GM12878 (cell line): ENCODE measurements at regions of chr22 and their contacts with region 1.

Region 1: DNA sequence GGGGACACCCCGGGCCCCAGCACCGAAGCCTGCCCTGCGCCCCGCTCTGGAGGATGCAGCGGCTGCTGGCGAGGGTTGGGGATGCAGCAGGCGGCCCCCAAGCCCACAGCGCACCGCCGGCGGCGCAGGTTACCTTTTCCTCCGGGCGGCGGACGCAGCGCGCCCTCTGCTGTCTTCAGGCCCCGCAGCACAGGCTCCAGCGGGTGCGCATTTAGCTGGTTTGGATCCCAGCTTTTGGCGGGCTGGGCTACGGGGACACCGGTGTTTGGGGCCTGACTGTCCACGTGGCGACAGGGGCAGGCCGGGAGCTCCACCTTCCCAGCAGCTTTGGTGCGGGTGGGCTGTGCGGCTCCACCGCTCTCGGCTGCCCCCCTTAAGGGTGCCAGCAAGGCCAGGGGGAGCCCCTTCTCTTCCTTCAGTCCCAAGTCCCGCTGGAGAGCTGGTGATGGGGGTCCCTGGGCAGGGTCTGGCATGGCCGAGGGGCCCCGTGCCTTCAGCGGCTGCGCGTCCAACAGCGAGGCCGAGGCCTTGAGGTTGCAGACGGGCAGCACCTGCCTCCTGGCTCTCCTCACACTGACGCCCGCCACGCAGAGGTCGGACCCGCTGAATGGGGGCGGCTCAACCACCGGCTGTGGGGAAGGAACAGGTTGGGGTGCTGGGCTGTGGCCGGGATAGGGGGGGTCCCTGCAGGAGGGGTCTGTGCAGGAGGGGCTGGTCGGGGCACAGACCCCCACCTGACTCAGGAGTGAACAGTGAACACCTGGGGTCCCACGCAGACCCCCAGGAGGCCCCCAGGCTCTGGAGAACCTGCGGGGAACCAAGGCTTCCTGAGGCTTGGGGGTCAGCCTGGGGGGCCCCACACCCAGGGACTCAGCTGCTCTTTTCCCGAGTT is 18.0 kb upstream of the IL17REL start:
- DNase-seq: no peak
- ATAC-seq: peak; percentile 98
- H3K4me3 ChIP-seq: no peak overlapping the region
- H3K27ac ChIP-seq: no peak overlapping the region
- H3K4me1 ChIP-seq: peaks cover 6% of the 10 kb centered on the region; the same call in 1 of the 2 replicates
- H3K27me3 ChIP-seq: peaks cover 0 to 4% of the 10 kb centered on the region in 2 experiments; a peak in 1 of 4 replicates
- CTCF ChIP-seq: peak; percentile 84 to 94 (median 94)
- EP300 ChIP-seq: no peak
- POLR2A ChIP-seq: no peak
- RAD21 ChIP-seq: peak; percentile 91

Region 2: DNA sequence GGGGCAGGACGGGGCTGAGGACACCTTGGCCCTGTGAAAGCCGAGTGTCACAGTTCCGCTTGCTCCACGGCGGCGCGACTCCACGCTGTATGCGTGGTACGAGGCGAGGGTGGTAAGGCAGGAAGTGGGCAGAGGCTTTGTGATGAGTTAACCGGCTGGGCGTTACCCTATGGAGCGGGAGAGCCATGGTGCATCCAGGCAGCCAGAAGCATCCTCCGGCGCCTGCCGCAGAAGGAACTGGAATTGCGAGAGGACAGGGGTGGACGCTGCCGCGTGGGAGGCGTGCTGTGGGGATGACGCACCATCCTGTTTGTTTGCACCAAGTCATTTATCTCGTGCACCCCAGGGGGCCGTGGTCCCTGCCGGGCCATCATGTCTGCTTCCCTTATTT is 846.7 kb before region 1 on chr22:
- CTCF ChIA-PET with region 1: no interaction called
- POLR2A ChIA-PET with region 1: no interaction called
- RAD21 ChIA-PET with region 1: no interaction called
- SMC1A ChIA-PET with region 1: no interaction called
- in situ Hi-C with region 1: no loop called
- intact Hi-C with region 1: no loop called
- DNase-seq: no peak
- ATAC-seq: no peak
- H3K4me3 ChIP-seq: no peak overlapping the region
- H3K27ac ChIP-seq: no peak overlapping the region
- H3K4me1 ChIP-seq: no peaks in the 10 kb centered on the region
- H3K27me3 ChIP-seq: no peaks in the 10 kb centered on the region
- CTCF ChIP-seq: no peak
- EP300 ChIP-seq: no peak
- POLR2A ChIP-seq: no peak
- RAD21 ChIP-seq: no peak

Region 3: DNA sequence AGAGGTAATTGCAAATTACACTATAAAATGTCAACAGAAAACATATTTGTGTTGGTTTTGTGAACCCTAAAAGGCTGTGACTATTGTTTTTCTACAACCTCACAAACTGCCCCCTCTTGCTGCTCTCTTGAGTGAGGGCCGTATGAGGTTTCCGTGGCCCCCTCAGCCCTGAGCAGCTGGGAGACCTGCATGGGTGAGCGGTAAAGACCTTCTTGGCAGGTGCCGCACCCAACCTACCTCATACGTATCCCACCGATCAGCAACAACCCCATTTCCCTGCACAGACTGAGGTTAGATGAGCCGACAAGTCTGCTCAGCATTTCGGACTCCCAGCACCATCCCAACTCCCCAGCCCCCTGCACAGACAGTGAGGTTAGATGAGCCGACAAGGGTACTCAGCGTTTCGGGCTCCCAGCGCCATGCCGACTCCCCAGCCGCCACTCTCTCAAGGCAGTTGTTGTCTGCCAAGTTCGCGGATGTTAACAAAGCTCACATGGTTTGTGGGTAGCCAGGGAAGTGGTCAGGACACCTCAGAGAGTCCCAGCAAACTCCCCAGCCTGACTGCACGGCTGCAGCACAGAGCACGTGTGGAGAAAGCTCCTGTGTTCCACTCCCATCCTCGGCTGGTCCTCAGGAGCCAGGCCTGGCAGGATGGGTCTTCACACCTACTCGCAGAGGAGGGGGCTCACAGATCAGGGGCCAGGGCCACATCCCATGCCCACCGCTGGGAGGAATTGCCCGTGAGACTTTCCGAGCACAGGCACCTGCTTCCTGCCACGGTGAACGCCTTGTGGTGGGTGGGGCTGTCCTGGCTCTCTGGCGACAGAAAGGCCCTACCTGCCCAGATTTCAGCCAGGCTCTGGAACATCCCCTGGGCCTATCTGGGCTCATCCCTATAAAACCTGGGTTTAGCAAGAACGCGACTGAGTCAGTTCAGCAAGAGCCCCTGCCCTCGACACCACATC is 705.7 kb before region 1 on chr22:
- CTCF ChIA-PET with region 1: no interaction called
- POLR2A ChIA-PET with region 1: no interaction called
- RAD21 ChIA-PET with region 1: no interaction called
- SMC1A ChIA-PET with region 1: no interaction called
- in situ Hi-C with region 1: loop called (anchors 25 kb)
- intact Hi-C with region 1: no loop called
- DNase-seq: no peak
- ATAC-seq: no peak
- H3K4me3 ChIP-seq: no peak overlapping the region
- H3K27ac ChIP-seq: no peak overlapping the region
- H3K4me1 ChIP-seq: no peaks in the 10 kb centered on the region
- H3K27me3 ChIP-seq: no peaks in the 10 kb centered on the region
- CTCF ChIP-seq: no peak
- EP300 ChIP-seq: no peak
- POLR2A ChIP-seq: no peak
- RAD21 ChIP-seq: no peak

Region 4: GRCh38 chr22:49925525-49926128 is 104.9 kb before region 1 on chr22:
- CTCF ChIA-PET with region 1: interaction called, 79 read pairs
- POLR2A ChIA-PET with region 1: interaction called, 4 read pairs
- RAD21 ChIA-PET with region 1: interaction called, 81 read pairs
- SMC1A ChIA-PET with region 1: interaction called, 43 read pairs
- in situ Hi-C with region 1: loop called (anchors 5 kb)
- intact Hi-C with region 1: no loop called
- DNase-seq: peak; percentile 71
- ATAC-seq: peak; percentile 72
- H3K4me3 ChIP-seq: peak overlapping the region; percentile 38; the same call in 1 of the 2 replicates
- H3K27ac ChIP-seq: peak overlapping the region; percentile 91
- H3K4me1 ChIP-seq: peaks cover 39% of the 10 kb centered on the region
- H3K27me3 ChIP-seq: no peaks in the 10 kb centered on the region
- CTCF ChIP-seq: no peak
- EP300 ChIP-seq: no peak
- POLR2A ChIP-seq: peak; percentile 85
- RAD21 ChIP-seq: no peak

Region 5: DNA sequence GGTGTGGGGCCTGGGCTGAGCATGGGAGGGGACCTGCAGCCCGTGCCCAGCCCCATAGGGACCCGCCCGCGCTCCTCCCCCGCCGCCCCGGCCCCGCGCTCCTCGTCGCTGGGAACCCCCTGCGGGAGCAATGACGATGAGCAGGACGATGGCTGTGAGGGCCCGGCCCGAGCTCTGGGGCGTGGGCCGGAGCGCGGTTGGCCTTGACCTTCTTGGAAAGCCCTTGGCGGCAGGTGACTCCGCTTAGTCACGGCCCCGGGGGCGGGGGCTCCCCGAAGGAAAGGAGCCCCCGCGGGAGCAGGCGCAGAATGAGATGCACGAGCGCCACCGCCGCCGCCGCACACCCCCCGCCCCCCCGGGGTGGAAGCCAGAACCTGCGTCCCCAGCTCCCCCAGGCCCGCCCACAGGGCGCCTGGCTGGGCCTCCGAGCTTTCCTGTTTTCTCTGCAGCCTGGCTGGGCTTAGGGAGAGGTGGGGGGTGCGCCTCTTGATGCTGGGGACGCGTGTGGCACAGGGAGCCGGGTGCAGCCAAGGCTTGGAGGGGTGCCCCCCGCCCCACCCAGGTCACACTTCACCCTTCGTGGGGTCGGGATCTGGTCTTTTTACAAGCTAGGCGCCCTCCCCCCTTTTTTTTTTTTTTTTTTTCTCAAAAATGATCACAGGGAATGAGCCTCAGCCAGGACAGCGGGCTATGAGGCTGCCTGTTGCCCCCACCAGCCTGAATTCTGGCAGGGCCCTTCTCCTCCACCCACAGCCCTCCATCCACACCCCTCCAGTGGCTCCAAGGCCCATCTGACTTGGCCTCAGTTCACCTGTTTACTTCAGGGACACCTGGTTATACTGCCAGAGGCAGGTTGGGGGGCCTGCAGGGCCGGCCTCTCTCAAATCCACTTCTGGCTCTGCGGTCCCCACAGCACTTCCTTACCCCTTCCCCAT is 94.3 kb before region 1 on chr22:
- CTCF ChIA-PET with region 1: interaction called, 79 read pairs
- POLR2A ChIA-PET with region 1: interaction called, 3 read pairs
- RAD21 ChIA-PET with region 1: interaction called, 81 read pairs
- SMC1A ChIA-PET with region 1: interaction called, 43 read pairs
- in situ Hi-C with region 1: loop called (anchors 5 kb)
- intact Hi-C with region 1: loop called (anchors 1 kb)
- DNase-seq: peak; percentile 69
- ATAC-seq: peak; percentile 87
- H3K4me3 ChIP-seq: peak overlapping the region; percentile 57
- H3K27ac ChIP-seq: peak overlapping the region; percentile 69
- H3K4me1 ChIP-seq: peaks cover 43% of the 10 kb centered on the region
- H3K27me3 ChIP-seq: no peaks in the 10 kb centered on the region
- CTCF ChIP-seq: no peak
- EP300 ChIP-seq: peak in 1 of 2 experiments; percentile 77; a peak in 2 of 4 replicates
- POLR2A ChIP-seq: peak; percentile 68
- RAD21 ChIP-seq: no peak

Region 6: DNA sequence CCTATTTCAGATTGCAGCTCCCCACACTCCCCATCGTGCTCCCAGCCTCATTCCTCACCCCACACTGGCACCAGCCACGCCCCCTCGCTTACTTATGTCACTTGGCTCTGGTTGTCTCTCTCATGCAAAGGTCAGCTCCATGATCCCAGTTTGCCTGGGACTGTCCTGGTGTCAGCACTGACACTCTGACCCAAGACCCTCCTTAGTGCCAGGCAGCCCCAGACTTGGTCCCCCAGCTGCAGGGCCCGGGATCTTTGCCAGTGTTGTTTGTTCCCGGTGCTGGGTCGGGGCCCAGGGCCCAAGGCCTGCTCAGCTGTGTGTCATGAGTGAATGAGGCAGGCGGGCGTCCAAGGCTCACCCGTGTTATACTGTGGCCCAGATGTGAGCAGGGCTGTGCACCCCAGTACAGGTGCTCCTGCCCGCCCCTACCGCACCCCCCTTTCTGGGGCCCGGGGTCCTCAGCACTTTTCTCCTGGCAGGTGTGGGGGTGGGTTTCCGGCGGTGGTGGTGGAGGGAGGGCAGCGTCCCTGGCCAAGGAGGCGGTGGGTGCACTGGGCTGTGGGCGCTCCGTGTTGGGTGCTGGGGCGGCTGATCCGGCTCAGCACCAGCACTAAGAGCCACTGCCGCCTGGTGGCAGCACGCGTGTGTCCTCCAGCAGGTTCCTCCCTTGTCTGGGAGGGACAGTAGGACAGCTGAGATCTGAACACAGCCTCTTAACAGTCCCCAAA is 37.5 kb before region 1 on chr22:
- CTCF ChIA-PET with region 1: interaction called, 47 read pairs
- POLR2A ChIA-PET with region 1: no interaction called
- RAD21 ChIA-PET with region 1: interaction called, 27 read pairs
- SMC1A ChIA-PET with region 1: interaction called, 16 read pairs
- in situ Hi-C with region 1: no loop called
- intact Hi-C with region 1: loop called (anchors 1 kb)
- DNase-seq: no peak
- ATAC-seq: peak; percentile 99
- H3K4me3 ChIP-seq: no peak overlapping the region
- H3K27ac ChIP-seq: no peak overlapping the region
- H3K4me1 ChIP-seq: no peaks in the 10 kb centered on the region
- H3K27me3 ChIP-seq: no peaks in the 10 kb centered on the region; a peak in 1 of 4 replicates
- CTCF ChIP-seq: peak; percentile 81 to 95 (median 93); a peak in 5 of 6 replicates
- EP300 ChIP-seq: no peak
- POLR2A ChIP-seq: no peak
- RAD21 ChIP-seq: peak; percentile 72

Region 7: GRCh38 chr22:50018608-50019285 is 11.8 kb before region 1 on chr22:
- CTCF ChIA-PET with region 1: interaction called, 11 read pairs
- POLR2A ChIA-PET with region 1: interaction called, 3 read pairs
- RAD21 ChIA-PET with region 1: interaction called, 6 read pairs
- SMC1A ChIA-PET with region 1: interaction called, 5 read pairs
- in situ Hi-C with region 1: no loop called
- intact Hi-C with region 1: no loop called
- DNase-seq: no peak
- ATAC-seq: no peak
- H3K4me3 ChIP-seq: no peak overlapping the region
- H3K27ac ChIP-seq: no peak overlapping the region
- H3K4me1 ChIP-seq: peaks cover 25% of the 10 kb centered on the region
- H3K27me3 ChIP-seq: no peaks in the 10 kb centered on the region; a peak in 2 of 4 replicates
- CTCF ChIP-seq: no peak
- EP300 ChIP-seq: no peak
- POLR2A ChIP-seq: no peak
- RAD21 ChIP-seq: no peak

Region 8: GRCh38 chr22:50221410-50222300 is 191.1 kb after region 1 on chr22:
- CTCF ChIA-PET with region 1: no interaction called
- POLR2A ChIA-PET with region 1: no interaction called
- RAD21 ChIA-PET with region 1: no interaction called
- SMC1A ChIA-PET with region 1: no interaction called
- in situ Hi-C with region 1: no loop called
- intact Hi-C with region 1: no loop called
- DNase-seq: no peak
- ATAC-seq: no peak
- H3K4me3 ChIP-seq: no peak overlapping the region
- H3K27ac ChIP-seq: no peak overlapping the region
- H3K4me1 ChIP-seq: no peaks in the 10 kb centered on the region
- H3K27me3 ChIP-seq: no peaks in the 10 kb centered on the region
- CTCF ChIP-seq: peak in 1 of 3 experiments; percentile 14; a peak in 1 of 6 replicates
- EP300 ChIP-seq: no peak
- POLR2A ChIP-seq: no peak
- RAD21 ChIP-seq: 0 out of 2 replicates have a peak, but pooled peaks have one; percentile 5